ENCODE measurements at regions of chr5 and their contacts with region 1.

Region 1: DNA sequence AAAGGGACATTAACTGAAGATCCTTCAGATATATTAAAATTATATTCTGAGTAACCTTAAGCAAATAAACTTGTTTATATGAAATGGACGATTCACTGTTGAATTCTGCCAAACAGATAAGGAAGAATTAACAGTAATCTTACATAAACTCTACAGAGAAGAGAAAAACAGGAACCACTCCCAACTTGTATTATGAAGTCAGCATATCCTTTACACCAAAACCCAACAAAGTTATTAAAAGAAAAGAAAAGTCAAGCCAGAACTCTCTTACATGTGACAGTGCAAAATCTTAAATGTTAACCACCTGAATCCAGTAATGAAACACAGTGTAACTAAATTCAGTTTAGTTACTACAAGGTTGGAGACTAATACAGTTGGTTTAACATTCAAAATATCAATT is 185.8 kb downstream of the DEPDC1B start:
- DNase-seq: no peak
- ATAC-seq: peak; percentile 50
- H3K4me3 ChIP-seq: no peak overlapping the region
- H3K27ac ChIP-seq: no peak overlapping the region
- H3K4me1 ChIP-seq: peaks cover 24% of the 10 kb centered on the region
- H3K27me3 ChIP-seq: no peaks in the 10 kb centered on the region
- CTCF ChIP-seq: no peak
- EP300 ChIP-seq: no peak
- POLR2A ChIP-seq: no peak
- RAD21 ChIP-seq: no peak

Region 2: GRCh38 chr5:59069438-59070079 is 1444.6 kb before region 1 on chr5:
- CTCF ChIA-PET with region 1: no interaction called
- POLR2A ChIA-PET with region 1: no interaction called
- RAD21 ChIA-PET with region 1: no interaction called
- SMC1A ChIA-PET with region 1: no interaction called
- in situ Hi-C with region 1: no loop called
- intact Hi-C with region 1: no loop called
- DNase-seq: no peak
- ATAC-seq: no peak
- H3K4me3 ChIP-seq: no peak overlapping the region
- H3K27ac ChIP-seq: no peak overlapping the region
- H3K4me1 ChIP-seq: no peaks in the 10 kb centered on the region
- H3K27me3 ChIP-seq: no peaks in the 10 kb centered on the region
- CTCF ChIP-seq: no peak
- EP300 ChIP-seq: no peak
- POLR2A ChIP-seq: no peak
- RAD21 ChIP-seq: no peak

Region 3: DNA sequence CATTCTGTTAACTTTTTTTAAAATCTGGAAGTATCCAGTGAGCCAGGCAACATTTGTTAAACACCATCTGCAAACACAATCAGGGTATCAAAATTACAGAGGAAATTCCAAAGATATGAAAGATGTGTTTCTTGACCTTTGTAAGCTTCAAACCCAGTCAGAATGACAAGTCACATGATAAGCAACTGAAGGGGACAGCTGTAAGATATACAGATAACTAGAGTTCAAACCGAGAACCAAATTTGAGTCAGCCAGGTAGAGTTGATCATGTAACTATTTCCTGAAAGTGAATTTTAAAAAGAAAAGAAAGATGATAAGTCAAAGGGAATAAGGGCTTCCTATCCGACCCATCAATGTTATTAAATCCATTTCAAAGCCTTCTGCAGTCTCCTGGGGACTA is 10.4 kb before region 1 on chr5:
- CTCF ChIA-PET with region 1: interaction called, 10 read pairs
- POLR2A ChIA-PET with region 1: interaction called, 6 read pairs
- RAD21 ChIA-PET with region 1: interaction called, 17 read pairs
- SMC1A ChIA-PET with region 1: interaction called, 9 read pairs
- in situ Hi-C with region 1: no loop called
- intact Hi-C with region 1: no loop called
- DNase-seq: no peak
- ATAC-seq: peak; percentile 93
- H3K4me3 ChIP-seq: 0 out of 2 replicates have a peak overlapping the region, but pooled peaks have one; percentile 28
- H3K27ac ChIP-seq: peak overlapping the region; percentile 53
- H3K4me1 ChIP-seq: peaks cover 26% of the 10 kb centered on the region
- H3K27me3 ChIP-seq: no peaks in the 10 kb centered on the region
- CTCF ChIP-seq: no peak
- EP300 ChIP-seq: peak; percentile 73 to 83; a peak in 3 of 4 replicates
- POLR2A ChIP-seq: no peak
- RAD21 ChIP-seq: no peak

Measured in GM12878 (cell line).